ENCODE measurements at regions of chr5 and their contacts with region 1.

Region 1: GRCh38 chr5:135466178-135467050 is 14.3 kb upstream of the TIFAB start:
- DNase-seq: peak; percentile 48 to 73
- ATAC-seq: peak; percentile 70 to 94 (median 90)
- H3K4me3 ChIP-seq: no peak overlapping the region
- H3K4me3 Mint-ChIP-seq: peak overlapping the region; percentile 47
- H3K27ac ChIP-seq: no peak overlapping the region
- H3K27ac Mint-ChIP-seq: no peak overlapping the region
- H3K4me1 ChIP-seq: peaks cover 9% of the 10 kb centered on the region
- H3K4me1 Mint-ChIP-seq: peaks cover 5 to 6% of the 10 kb centered on the region in 2 donors
- H3K27me3 ChIP-seq: no peaks in the 10 kb centered on the region
- H3K27me3 Mint-ChIP-seq: peaks cover 29 to 41% of the 10 kb centered on the region in 2 donors
- CTCF ChIP-seq: peak; percentile 57

Region 2: DNA sequence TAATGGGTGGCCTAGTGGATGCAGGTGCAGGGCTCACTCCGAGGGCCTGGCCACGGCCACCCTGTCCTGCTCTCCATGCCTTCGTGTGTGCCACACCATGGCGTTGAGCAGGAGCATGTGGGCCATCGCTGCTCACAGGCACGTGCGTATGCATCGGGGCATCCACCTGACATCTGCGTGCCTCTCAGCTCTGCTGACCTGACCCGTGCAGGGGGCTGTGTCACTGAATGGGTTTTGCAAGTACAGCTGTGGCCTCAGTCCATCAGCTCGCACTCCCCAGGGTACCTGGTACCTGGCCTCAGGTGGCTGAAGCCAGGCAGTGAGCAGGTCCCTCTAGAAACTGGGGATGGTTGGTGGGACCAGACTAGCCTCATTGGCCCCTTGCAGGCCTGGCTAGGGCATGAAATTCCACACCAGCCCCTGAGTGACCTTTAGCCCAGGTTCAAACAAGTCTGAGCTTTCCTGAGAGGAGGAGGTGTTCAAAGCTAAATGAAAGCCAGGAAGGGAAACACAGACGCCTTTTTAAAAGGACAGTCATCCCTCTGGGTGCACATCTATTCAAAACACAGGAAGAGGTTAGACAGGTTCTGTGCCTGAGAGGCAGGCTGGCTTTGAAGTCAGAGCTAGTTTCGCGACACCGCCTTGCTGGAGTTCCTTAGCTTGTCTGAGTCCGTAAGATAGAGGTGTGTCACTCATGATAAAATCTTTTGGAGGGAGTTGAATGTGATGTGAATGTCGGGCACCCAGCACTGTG is 141.3 kb before region 1 on chr5:
- intact Hi-C with region 1: no loop called
- DNase-seq: peak in 1 of 2 donors; percentile 63
- ATAC-seq: no peak
- H3K4me3 ChIP-seq: no peak overlapping the region
- H3K4me3 Mint-ChIP-seq: no peak overlapping the region
- H3K27ac ChIP-seq: no peak overlapping the region
- H3K27ac Mint-ChIP-seq: no peak overlapping the region
- H3K4me1 ChIP-seq: no peaks in the 10 kb centered on the region
- H3K4me1 Mint-ChIP-seq: no peaks in the 10 kb centered on the region
- H3K27me3 ChIP-seq: no peaks in the 10 kb centered on the region
- H3K27me3 Mint-ChIP-seq: no peaks in the 10 kb centered on the region
- CTCF ChIP-seq: no peak

Region 3: DNA sequence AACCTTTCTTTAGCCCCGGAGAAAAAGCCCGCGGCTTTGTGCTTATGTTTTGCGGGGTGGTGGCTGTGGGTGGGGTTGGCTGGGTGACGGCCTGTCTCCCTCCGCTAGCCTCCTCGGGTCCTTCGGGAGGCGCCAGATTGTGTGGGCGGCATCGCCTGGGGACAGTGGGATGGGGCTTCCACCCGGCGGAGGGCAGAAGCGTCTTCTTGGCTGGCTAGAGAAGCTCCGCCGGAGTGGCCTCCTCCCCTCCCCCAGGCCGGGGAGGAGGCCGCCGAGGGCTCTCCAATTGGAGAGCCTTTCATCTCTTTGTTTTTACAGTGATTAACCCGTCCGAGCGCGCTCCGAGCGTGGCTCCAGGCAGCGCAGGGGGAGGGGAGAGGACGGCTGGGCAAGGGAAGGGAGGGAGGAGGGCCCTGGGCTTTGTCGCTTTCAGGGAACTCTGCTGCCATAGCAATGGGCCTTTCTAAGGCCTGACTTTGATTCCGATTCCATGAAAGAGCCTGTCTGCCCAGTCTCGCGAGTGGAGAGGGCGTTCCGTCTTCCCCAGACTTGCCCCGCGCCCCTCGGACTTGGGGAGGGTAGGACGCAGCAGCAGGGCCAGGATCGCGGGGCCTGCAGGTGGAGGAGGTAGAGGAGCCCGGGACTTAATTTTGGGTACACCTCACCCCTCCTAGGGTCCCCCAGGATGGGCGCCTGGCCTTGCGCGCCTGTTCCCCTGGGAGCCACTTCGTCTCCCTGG is 22.5 kb after region 1 on chr5:
- intact Hi-C with region 1: no loop called
- DNase-seq: no peak
- ATAC-seq: no peak
- H3K4me3 ChIP-seq: no peak overlapping the region
- H3K4me3 Mint-ChIP-seq: no peak overlapping the region
- H3K27ac ChIP-seq: no peak overlapping the region
- H3K27ac Mint-ChIP-seq: no peak overlapping the region
- H3K4me1 ChIP-seq: no peaks in the 10 kb centered on the region
- H3K4me1 Mint-ChIP-seq: peaks cover 0 to 5% of the 10 kb centered on the region in 2 donors
- H3K27me3 ChIP-seq: peaks cover 27% of the 10 kb centered on the region
- H3K27me3 Mint-ChIP-seq: peaks cover 52 to 59% of the 10 kb centered on the region in 2 donors
- CTCF ChIP-seq: no peak

Region 4: DNA sequence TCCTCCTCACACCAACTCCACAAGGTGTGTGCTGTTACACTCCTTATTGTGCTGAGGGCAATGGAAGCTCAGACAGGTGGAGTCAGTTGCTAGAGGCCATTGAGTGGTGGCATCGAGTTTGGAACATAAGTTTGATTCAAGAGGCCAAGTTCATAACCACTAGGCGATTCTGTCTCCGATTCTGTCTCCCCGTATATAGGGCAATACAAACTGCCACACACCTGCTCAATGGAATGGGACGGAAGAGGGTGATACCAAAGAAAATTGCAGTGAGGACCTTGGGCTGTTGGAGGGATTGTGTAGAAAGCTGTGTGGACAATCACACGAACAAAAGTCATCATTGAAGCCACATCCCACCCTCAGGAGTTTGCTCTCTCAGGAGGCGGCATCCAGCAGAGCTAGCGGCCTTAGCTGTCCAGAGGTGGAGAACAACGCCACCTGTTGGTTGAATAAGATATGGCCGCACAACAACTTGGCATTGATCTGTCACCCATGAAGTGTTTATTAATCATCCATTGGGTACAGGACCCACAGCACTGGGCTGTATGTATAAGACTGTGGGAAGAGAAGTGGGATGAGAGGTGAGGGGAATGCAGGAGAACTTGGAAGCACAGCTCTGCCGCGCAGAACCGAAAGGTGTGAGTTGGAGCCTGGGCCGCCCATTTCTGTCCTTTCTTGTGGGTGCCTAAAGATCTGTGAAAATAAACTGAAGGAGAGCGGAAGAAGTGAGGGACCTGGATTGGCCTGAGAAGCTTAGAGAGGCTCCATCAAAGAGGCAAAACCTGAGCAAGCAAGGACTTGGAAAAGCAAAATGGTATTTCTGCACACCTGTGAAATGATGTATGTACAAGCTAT is 85.4 kb after region 1 on chr5:
- intact Hi-C with region 1: loop called (anchors 1 kb)
- DNase-seq: peak; percentile 29 to 70
- ATAC-seq: peak; percentile 47 to 86 (median 65)
- H3K4me3 ChIP-seq: no peak overlapping the region
- H3K4me3 Mint-ChIP-seq: no peak overlapping the region
- H3K27ac ChIP-seq: no peak overlapping the region
- H3K27ac Mint-ChIP-seq: no peak overlapping the region
- H3K4me1 ChIP-seq: no peaks in the 10 kb centered on the region
- H3K4me1 Mint-ChIP-seq: no peaks in the 10 kb centered on the region
- H3K27me3 ChIP-seq: peaks cover 2% of the 10 kb centered on the region
- H3K27me3 Mint-ChIP-seq: peaks cover 27 to 42% of the 10 kb centered on the region in 2 donors
- CTCF ChIP-seq: peak; percentile 76

Region 5: GRCh38 chr5:135565725-135566421 is 99.5 kb after region 1 on chr5:
- intact Hi-C with region 1: loop called (anchors 5 kb)
- DNase-seq: peak; percentile 63 to 73
- ATAC-seq: peak; percentile 62 to 85 (median 65)
- H3K4me3 ChIP-seq: no peak overlapping the region
- H3K4me3 Mint-ChIP-seq: no peak overlapping the region
- H3K27ac ChIP-seq: no peak overlapping the region
- H3K27ac Mint-ChIP-seq: no peak overlapping the region
- H3K4me1 ChIP-seq: peaks cover 2% of the 10 kb centered on the region
- H3K4me1 Mint-ChIP-seq: peaks cover 3 to 6% of the 10 kb centered on the region in 2 donors
- H3K27me3 ChIP-seq: no peaks in the 10 kb centered on the region
- H3K27me3 Mint-ChIP-seq: peaks cover 0 to 2% of the 10 kb centered on the region in 2 donors
- CTCF ChIP-seq: peak; percentile 76

Measured in natural killer cell (primary cell).